Adrenal gland (tissue), 19 donors: ENCODE measurements at regions of chr6 and their contacts with region 1.

Region 1: GRCh38 chr6:155248008-155249001 is 15.5 kb upstream of the CLDN20 start:
- DNase-seq: peak; percentile 35 to 81 (median 49)
- H3K4me3 ChIP-seq: no peak overlapping the region
- H3K27ac ChIP-seq: no peak overlapping the region
- H3K4me1 ChIP-seq: peaks cover 6 to 9% of the 10 kb centered on the region in 2 donors
- H3K27me3 ChIP-seq: no peaks in the 10 kb centered on the region
- CTCF ChIP-seq: peak; percentile 32 to 62 (median 52)
- POLR2A ChIP-seq: no peak

Region 2: DNA sequence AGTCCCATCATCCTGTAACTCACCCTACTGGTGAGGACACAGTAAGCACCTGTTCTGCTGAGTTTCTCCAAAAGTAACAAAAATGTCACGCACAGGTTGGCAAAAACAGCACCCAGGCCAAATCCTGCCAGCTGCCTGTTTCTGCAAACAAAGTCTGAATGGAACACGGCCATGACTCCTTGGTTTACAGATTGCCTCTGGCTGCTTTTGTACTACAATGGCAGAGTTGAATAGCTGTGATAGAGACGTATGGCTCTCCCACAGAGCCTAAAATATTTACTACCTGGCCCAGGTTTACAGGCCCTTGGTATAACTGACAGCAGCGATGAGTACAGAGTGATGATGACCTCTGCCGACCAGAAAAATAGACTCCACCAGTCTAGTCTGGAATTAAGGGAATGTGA is 790.4 kb before region 1 on chr6:
- intact Hi-C with region 1: no loop called
- DNase-seq: no peak
- H3K4me3 ChIP-seq: no peak overlapping the region
- H3K27ac ChIP-seq: no peak overlapping the region
- H3K4me1 ChIP-seq: peaks cover 0 to 6% of the 10 kb centered on the region in 2 donors
- H3K27me3 ChIP-seq: no peaks in the 10 kb centered on the region
- CTCF ChIP-seq: no peak
- POLR2A ChIP-seq: no peak

Region 3: DNA sequence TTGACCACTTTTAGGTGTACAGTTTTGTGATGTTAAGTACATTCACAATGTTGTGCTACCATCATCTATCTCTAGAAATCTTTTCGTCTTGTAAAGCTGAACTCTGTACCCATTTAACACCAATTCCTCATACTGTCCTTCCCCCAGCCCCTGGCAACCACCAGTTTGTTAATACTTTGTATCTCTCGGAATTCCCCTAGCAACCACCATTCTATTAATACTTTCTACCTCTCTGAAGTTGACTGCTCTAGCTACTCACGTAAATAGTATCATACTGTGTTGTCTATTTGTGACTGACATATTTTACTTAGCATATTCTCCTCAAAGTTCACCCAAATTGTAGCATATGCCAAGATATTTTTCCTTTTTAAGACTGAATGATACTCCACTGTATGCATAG is 66.8 kb before region 1 on chr6:
- intact Hi-C with region 1: loop called (anchors 2 to 5 kb)
- DNase-seq: no peak
- H3K4me3 ChIP-seq: no peak overlapping the region
- H3K27ac ChIP-seq: no peak overlapping the region
- H3K4me1 ChIP-seq: no peaks in the 10 kb centered on the region
- H3K27me3 ChIP-seq: no peaks in the 10 kb centered on the region
- CTCF ChIP-seq: no peak
- POLR2A ChIP-seq: no peak

Region 4: DNA sequence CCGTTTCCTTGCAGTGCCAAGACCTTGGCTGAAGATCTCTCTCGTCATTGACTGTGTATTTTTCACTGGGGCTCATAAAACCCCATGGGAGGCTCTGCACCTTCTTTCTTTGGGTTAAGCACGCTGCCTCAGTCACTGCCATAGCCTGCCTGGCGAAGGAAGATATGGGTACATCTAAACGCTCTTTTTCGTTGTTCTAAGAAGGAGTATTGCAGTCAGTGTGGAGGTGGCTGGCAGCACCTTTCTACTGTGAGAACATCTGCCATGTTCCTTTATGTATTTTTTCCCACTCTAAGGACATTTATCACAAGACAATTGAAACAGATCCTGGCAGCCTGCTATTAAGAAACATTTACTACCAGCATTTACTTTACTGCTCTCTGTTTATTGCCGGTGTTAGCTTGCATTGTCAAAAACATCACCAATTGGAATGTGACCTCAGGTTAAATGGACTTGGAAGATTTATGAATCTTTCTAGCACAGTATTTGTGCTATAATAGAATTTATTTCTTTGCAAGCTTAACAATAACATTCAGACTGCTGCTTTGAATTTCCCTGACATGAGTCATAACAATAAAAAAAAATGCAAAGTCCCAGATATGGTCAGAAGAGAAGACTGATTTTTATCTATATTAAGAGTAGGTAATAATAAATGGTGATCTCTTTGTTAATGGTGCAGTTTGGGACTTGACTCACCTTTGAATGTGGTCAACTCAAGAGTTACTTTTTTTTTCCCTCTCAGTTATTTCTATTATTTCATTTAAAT is 46.7 kb before region 1 on chr6:
- intact Hi-C with region 1: no loop called
- DNase-seq: no peak
- H3K4me3 ChIP-seq: no peak overlapping the region
- H3K27ac ChIP-seq: peak overlapping the region in 3 of 5 donors; percentile 41 to 79 (median 73)
- H3K4me1 ChIP-seq: peaks cover 12 to 25% of the 10 kb centered on the region in 2 donors
- H3K27me3 ChIP-seq: no peaks in the 10 kb centered on the region
- CTCF ChIP-seq: no peak
- POLR2A ChIP-seq: peak in 1 of 2 donors; percentile 10

Region 5: GRCh38 chr6:155327326-155328073 is 79.2 kb after region 1 on chr6:
- intact Hi-C with region 1: no loop called
- DNase-seq: peak; percentile 49 to 83 (median 61)
- H3K4me3 ChIP-seq: no peak overlapping the region
- H3K27ac ChIP-seq: no peak overlapping the region
- H3K4me1 ChIP-seq: no peaks in the 10 kb centered on the region
- H3K27me3 ChIP-seq: no peaks in the 10 kb centered on the region
- CTCF ChIP-seq: peak; percentile 79 to 96 (median 88)
- POLR2A ChIP-seq: no peak